Dorsolateral prefrontal cortex (tissue), 120 donors: ENCODE measurements at regions of chr2 and their contacts with region 1.

Region 1: GRCh38 chr2:98654699-98655495 is 46.5 kb downstream of the UNC50 start:
- DNase-seq: no peak
- H3K4me3 ChIP-seq: no peak overlapping the region
- H3K27ac ChIP-seq: no peak overlapping the region
- H3K27me3 ChIP-seq: no peaks in the 10 kb centered on the region
- CTCF ChIP-seq: no peak

Region 2: GRCh38 chr2:97982621-97983020 is 672.3 kb before region 1 on chr2:
- intact Hi-C with region 1: no loop called
- DNase-seq: no peak
- H3K4me3 ChIP-seq: no peak overlapping the region
- H3K27ac ChIP-seq: no peak overlapping the region
- H3K27me3 ChIP-seq: no peaks in the 10 kb centered on the region
- CTCF ChIP-seq: no peak

Region 3: GRCh38 chr2:98702127-98702802 is 47.4 kb after region 1 on chr2:
- intact Hi-C with region 1: loop called in 1 of 2 experiments (anchors 10 kb)
- DNase-seq: peak in 6 of 10 donors; percentile 10 to 53 (median 46)
- H3K4me3 ChIP-seq: peak overlapping the region in 5 of 59 donors; percentile 2 to 18 (median 14)
- H3K27ac ChIP-seq: peak overlapping the region in 47 of 59 donors; percentile 0 to 74 (median 48)
- H3K27me3 ChIP-seq: no peaks in the 10 kb centered on the region
- CTCF ChIP-seq: no peak

Region 4: GRCh38 chr2:99066075-99066958 is 411.4 kb after region 1 on chr2:
- intact Hi-C with region 1: loop called in 1 of 2 experiments (anchors 5 kb)
- DNase-seq: peak in 3 of 10 donors; percentile 35 to 43 (median 40)
- H3K4me3 ChIP-seq: peak overlapping the region in 2 of 59 donors; percentile 7 to 25
- H3K27ac ChIP-seq: peak overlapping the region in 50 of 59 donors; percentile 7 to 78 (median 45)
- H3K27me3 ChIP-seq: no peaks in the 10 kb centered on the region
- CTCF ChIP-seq: peak in 55 of 56 donors; percentile 11 to 75 (median 54)